ENCODE measurements at regions of chrX and their contacts with region 1.

Region 1: GRCh38 chrX:109890895-109891502 is 111.9 kb upstream of the TMEM164 start:
- DNase-seq: peak; percentile 47 to 72
- ATAC-seq: peak; percentile 72 to 95
- H3K4me3 ChIP-seq: no peak overlapping the region
- H3K27ac ChIP-seq: peak overlapping the region in 1 of 2 experiments; percentile 38; a peak in 1 of 6 replicates
- H3K4me1 ChIP-seq: no peaks in the 10 kb centered on the region
- CTCF ChIP-seq: peak; percentile 74
- EP300 ChIP-seq: no peak
- POLR2A ChIP-seq: no peak
- RAD21 ChIP-seq: peak; percentile 71 to 78

Region 2: GRCh38 chrX:109485470-109486340 is 405.3 kb before region 1 on chrX:
- CTCF ChIA-PET with region 1: interaction called, 30 read pairs
- POLR2A ChIA-PET with region 1: no interaction called
- DNase-seq: peak; percentile 15 to 70
- ATAC-seq: peak in 1 of 2 experiments; percentile 54; a peak in 3 of 6 replicates
- H3K4me3 ChIP-seq: no peak overlapping the region
- H3K27ac ChIP-seq: no peak overlapping the region
- H3K4me1 ChIP-seq: no peaks in the 10 kb centered on the region
- CTCF ChIP-seq: peak; percentile 97
- EP300 ChIP-seq: no peak
- POLR2A ChIP-seq: no peak
- RAD21 ChIP-seq: peak; percentile 78 to 85

Region 3: GRCh38 chrX:109536439-109537336 is 354.3 kb before region 1 on chrX and contains the start of gene NXT2:
- CTCF ChIA-PET with region 1: no interaction called
- POLR2A ChIA-PET with region 1: interaction called, 14 read pairs
- DNase-seq: peak; percentile 86 to 94
- ATAC-seq: peak; percentile 99 to 100
- H3K4me3 ChIP-seq: peak within 1 kb of the TSS; percentile 74
- H3K27ac ChIP-seq: peak within 1 kb of the TSS; percentile 90 to 91
- H3K4me1 ChIP-seq: no peaks in the 10 kb centered on the region
- CTCF ChIP-seq: no peak
- EP300 ChIP-seq: no peak
- POLR2A ChIP-seq: peak; percentile 86
- RAD21 ChIP-seq: no peak
- polyA plus RNA-seq, gene NXT2: 17.6 and 22.0 TPM in 2 replicates

Region 4: GRCh38 chrX:109635176-109635575 is 255.8 kb before region 1 on chrX:
- CTCF ChIA-PET with region 1: interaction called, 14 read pairs
- POLR2A ChIA-PET with region 1: no interaction called
- DNase-seq: peak; percentile 3 to 15
- ATAC-seq: peak; percentile 66 to 79; a peak in 4 of 6 replicates
- H3K4me3 ChIP-seq: no peak overlapping the region
- H3K27ac ChIP-seq: no peak overlapping the region
- H3K4me1 ChIP-seq: no peaks in the 10 kb centered on the region
- CTCF ChIP-seq: peak; percentile 42
- EP300 ChIP-seq: no peak
- POLR2A ChIP-seq: no peak
- RAD21 ChIP-seq: 0 out of 5 replicates have a peak, but pooled peaks of 1 of the 2 experiments have one; percentile 7

Region 5: GRCh38 chrX:109714340-109714958 is 176.6 kb before region 1 on chrX:
- CTCF ChIA-PET with region 1: interaction called, 57 read pairs
- POLR2A ChIA-PET with region 1: no interaction called
- DNase-seq: peak in 1 of 2 experiments; percentile 53
- ATAC-seq: peak; percentile 68 to 88; a peak in 5 of 6 replicates
- H3K4me3 ChIP-seq: no peak overlapping the region
- H3K27ac ChIP-seq: peak overlapping the region; percentile 64
- H3K4me1 ChIP-seq: peaks cover 36% of the 10 kb centered on the region
- CTCF ChIP-seq: no peak
- EP300 ChIP-seq: no peak
- POLR2A ChIP-seq: no peak
- RAD21 ChIP-seq: no peak

Region 6: DNA sequence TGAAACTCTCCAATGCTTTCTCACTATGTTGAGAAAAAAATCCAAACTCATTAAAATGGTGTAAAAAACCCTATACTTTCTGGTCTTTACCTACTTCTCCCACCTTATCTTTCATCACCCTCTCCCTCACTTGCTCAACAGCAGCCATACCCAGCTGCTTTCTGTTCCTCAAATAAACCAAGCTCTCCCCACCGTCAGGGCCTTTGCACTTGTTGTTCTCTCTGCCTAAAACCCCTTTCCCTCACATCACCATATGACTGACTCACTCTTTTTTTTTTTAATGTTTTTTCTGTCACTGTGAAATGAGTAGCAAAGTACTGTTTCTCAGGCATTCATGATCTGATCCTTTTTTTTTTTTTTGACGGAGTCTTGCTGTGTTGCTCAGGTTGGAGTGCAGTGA is 10.4 kb before region 1 on chrX:
- CTCF ChIA-PET with region 1: interaction called, 38 read pairs
- POLR2A ChIA-PET with region 1: no interaction called
- DNase-seq: no peak
- ATAC-seq: no peak
- H3K4me3 ChIP-seq: no peak overlapping the region
- H3K27ac ChIP-seq: no peak overlapping the region
- H3K4me1 ChIP-seq: 0 out of 3 replicates have a peak, but pooled peaks cover 6% of the 10 kb centered on the region
- CTCF ChIP-seq: no peak
- EP300 ChIP-seq: no peak
- POLR2A ChIP-seq: no peak
- RAD21 ChIP-seq: no peak

Region 7: DNA sequence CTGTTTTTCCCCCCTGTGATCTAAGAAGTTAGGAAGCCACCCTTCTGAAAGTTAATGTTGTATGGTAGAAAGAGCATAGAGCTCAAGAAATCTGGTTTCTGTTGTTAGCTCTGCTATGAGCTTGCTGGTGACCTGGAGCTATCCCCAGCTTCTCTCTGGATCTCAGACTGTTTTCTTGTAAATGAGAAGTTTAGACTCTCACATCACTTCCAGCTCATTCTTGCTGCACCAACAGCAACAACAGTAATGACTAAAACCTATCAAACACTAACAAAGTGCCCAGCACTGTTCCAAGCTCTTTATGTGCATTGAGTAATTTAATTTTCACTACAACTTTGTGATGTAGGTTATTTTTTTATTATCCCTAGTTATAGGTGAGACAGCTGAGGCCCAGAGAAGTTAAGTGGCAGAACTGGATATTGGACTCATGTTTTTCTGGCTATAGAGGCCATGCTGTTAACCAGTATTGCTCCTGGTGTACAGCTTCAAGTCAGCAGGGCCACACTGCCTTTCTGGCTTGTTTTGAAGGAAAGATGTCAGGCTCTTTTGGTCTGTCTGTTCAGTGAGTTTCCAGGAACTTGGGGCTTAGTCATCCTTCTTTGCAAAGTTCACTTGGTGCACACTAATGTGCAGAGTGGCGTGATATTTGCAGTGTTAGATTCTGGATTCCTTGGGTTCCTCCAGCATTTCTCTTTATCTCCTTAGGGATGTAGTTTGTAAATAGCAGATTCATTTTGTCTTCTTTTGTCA is 84.1 kb after region 1 on chrX:
- CTCF ChIA-PET with region 1: no interaction called
- POLR2A ChIA-PET with region 1: no interaction called
- DNase-seq: no peak
- ATAC-seq: no peak
- H3K4me3 ChIP-seq: no peak overlapping the region
- H3K27ac ChIP-seq: no peak overlapping the region
- H3K4me1 ChIP-seq: no peaks in the 10 kb centered on the region
- CTCF ChIP-seq: no peak
- EP300 ChIP-seq: no peak
- POLR2A ChIP-seq: no peak
- RAD21 ChIP-seq: no peak

Measured in A549 (cell line).